ENCODE measurements at regions of chr6 and their contacts with region 1.

Region 1: DNA sequence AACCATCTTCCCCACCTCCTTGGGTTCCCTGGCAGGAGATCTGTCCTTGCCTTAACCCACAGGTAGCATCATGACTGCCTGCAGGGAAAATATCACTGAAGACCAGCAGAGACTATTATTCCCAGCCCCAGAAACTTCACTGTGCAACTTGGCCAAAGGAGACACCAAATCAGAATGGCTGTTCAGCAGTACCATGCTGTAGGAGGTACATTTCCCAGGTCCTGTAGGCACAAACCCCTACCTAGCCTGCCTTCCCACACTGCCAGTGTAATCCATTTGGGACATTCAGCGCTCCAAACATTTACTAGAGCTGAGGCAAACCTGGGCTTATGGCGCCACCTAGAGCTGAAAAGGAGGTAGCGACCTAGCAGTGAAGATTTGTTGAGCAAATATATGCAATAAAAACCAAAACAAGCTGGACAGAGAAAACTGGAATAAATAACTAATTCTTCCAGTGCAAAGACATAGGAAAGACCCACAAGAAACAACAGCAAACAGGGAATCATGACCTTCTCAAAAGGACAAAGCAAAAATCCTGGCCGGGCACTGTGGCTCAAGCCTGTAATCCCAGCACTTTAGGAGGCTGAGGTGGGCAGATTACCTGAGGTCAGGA is 60.3 kb downstream of the VTA1 start:
- DNase-seq: peak; percentile 62
- H3K4me3 Mint-ChIP-seq: no peak overlapping the region
- H3K27ac Mint-ChIP-seq: no peak overlapping the region
- H3K4me1 Mint-ChIP-seq: peaks cover 2% of the 10 kb centered on the region
- H3K27me3 Mint-ChIP-seq: no peaks in the 10 kb centered on the region

Region 2: GRCh38 chr6:140774080-140774505 is 1433.3 kb before region 1 on chr6:
- CTCF ChIA-PET with region 1: no interaction called
- intact Hi-C with region 1: no loop called
- DNase-seq: no peak
- H3K4me3 Mint-ChIP-seq: no peak overlapping the region
- H3K27ac Mint-ChIP-seq: no peak overlapping the region
- H3K4me1 Mint-ChIP-seq: no peaks in the 10 kb centered on the region
- H3K27me3 Mint-ChIP-seq: peaks cover 18% of the 10 kb centered on the region

Region 3: DNA sequence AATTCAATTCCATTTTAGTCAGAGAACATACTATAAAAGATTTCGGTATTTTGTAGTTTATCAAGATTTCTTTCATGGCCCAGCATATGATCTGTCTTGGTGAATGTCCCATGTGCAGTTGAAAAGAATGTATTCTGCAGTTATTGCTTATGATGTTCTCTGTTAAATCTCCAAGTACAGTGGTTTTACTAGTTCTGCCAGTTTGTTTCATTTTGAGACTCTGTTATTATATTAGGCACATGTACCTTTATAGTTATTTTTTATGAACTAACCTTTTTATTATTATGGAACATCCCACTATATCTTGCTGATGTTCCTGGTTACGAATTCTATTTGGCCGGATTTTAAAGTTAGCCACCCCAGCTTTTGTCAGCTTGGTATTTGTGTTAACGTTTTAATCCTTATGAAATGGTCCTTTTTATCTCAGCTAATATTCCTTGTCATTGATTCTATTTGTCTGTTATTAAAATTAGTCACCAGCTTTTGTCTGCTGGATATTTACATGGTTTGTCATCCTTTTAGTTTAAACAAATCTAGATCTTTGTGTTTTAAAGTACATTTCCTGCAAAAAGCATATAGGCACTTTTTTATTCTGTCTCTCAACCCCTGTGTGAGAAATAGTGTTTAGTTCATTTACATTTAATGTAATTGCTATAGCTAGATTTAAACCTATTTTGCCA is 11.4 kb before region 1 on chr6:
- CTCF ChIA-PET with region 1: interaction called, 17 read pairs
- intact Hi-C with region 1: no loop called
- DNase-seq: no peak
- H3K4me3 Mint-ChIP-seq: no peak overlapping the region
- H3K27ac Mint-ChIP-seq: no peak overlapping the region
- H3K4me1 Mint-ChIP-seq: peaks cover 33% of the 10 kb centered on the region
- H3K27me3 Mint-ChIP-seq: no peaks in the 10 kb centered on the region

Region 4: GRCh38 chr6:142218446-142218845 is 11.1 kb after region 1 on chr6:
- CTCF ChIA-PET with region 1: interaction called, 14 read pairs
- intact Hi-C with region 1: no loop called
- DNase-seq: no peak
- H3K4me3 Mint-ChIP-seq: no peak overlapping the region
- H3K27ac Mint-ChIP-seq: no peak overlapping the region
- H3K4me1 Mint-ChIP-seq: no peaks in the 10 kb centered on the region
- H3K27me3 Mint-ChIP-seq: no peaks in the 10 kb centered on the region

Region 5: GRCh38 chr6:142944124-142945066 is 737.0 kb after region 1 on chr6:
- CTCF ChIA-PET with region 1: no interaction called
- intact Hi-C with region 1: no loop called
- DNase-seq: peak; percentile 96
- H3K4me3 Mint-ChIP-seq: peak overlapping the region; percentile 99
- H3K27ac Mint-ChIP-seq: peak overlapping the region; percentile 99
- H3K4me1 Mint-ChIP-seq: peaks cover 47% of the 10 kb centered on the region
- H3K27me3 Mint-ChIP-seq: no peaks in the 10 kb centered on the region